ENCODE measurements at regions of chr7 and their contacts with region 1.

Region 1: GRCh38 chr7:131057015-131057793 is 270.5 kb upstream of the MKLN1 start:
- DNase-seq: peak in 2 of 5 donors; percentile 71 to 72
- H3K4me3 ChIP-seq: peak overlapping the region; percentile 1
- H3K4me3 Mint-ChIP-seq: peak overlapping the region; percentile 70 to 88 (median 78)
- H3K27ac ChIP-seq: peak overlapping the region; percentile 58
- H3K27ac Mint-ChIP-seq: peak overlapping the region; percentile 89 to 97 (median 94)
- H3K4me1 ChIP-seq: peaks cover 86% of the 10 kb centered on the region
- H3K4me1 Mint-ChIP-seq: peaks cover 62 to 88% (median 83%) of the 10 kb centered on the region in 3 donors
- H3K27me3 ChIP-seq: no peaks in the 10 kb centered on the region
- H3K27me3 Mint-ChIP-seq: peaks cover 0 to 12% of the 10 kb centered on the region in 2 donors

Region 2: DNA sequence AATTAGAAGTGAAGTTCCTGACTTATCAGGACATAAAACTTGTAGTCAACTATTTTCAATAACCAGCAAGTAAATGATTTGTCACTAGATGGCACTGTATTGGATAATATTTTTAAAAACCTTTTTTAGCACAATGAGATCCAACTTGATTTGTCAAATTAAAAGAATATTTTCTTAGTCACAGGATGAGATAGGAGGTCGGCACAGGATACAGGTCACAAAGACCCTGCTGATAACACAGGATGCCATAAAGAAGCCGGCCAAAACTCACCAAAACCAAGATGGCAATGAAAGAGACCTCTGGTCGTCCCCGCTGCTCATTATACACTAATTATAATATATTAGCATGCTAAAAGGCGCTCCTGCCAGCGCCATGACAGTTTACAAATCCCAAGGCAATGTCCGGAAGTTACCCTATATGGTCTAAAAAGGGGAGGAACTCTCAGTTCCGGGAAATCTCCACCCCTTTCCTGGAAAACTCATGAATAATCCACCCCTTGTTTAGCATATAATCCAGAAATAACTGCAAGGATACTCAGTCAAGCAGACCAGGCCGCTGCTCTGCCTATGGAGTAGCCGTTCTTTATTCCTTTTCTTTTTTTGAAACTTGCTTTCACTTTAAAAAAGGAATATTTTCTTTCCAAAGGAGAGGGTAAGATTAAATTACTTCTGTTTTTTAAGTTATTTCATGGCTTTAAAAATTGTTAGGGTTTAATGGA is 14.7 kb after region 1 on chr7:
- CTCF ChIA-PET with region 1: interaction called, 12 read pairs
- POLR2A ChIA-PET with region 1: interaction called, 5 read pairs
- DNase-seq: no peak
- H3K4me3 ChIP-seq: no peak overlapping the region
- H3K4me3 Mint-ChIP-seq: peak overlapping the region; percentile 2 to 47 (median 24)
- H3K27ac ChIP-seq: peak overlapping the region; percentile 48
- H3K27ac Mint-ChIP-seq: peak overlapping the region in 2 of 8 donors; percentile 12 to 56
- H3K4me1 ChIP-seq: peaks cover 81% of the 10 kb centered on the region
- H3K4me1 Mint-ChIP-seq: peaks cover 38 to 85% (median 38%) of the 10 kb centered on the region in 3 donors
- H3K27me3 ChIP-seq: no peaks in the 10 kb centered on the region
- H3K27me3 Mint-ChIP-seq: peaks cover 0 to 14% of the 10 kb centered on the region in 2 donors

Region 3: DNA sequence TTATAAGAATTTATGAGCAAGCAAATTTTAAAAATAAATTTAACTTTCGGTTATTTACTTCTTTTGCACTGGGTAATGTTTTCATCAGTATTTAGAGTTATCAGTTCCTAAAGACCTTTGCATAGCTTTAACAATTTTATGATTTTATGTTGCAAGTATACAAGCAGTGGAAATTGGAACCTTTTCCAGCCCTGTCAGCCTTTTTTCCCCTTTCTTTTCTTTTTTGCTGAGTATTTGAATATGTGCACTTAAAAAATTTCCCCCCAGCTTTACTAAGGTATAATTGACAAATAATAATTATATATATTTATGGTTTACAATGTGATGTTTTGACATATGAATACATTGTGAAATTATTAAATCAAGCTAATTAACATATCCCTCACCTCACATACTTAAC is 333.1 kb after region 1 on chr7:
- CTCF ChIA-PET with region 1: interaction called, 3 read pairs
- POLR2A ChIA-PET with region 1: interaction called, 10 read pairs
- DNase-seq: no peak
- H3K4me3 ChIP-seq: no peak overlapping the region
- H3K4me3 Mint-ChIP-seq: no peak overlapping the region
- H3K27ac ChIP-seq: no peak overlapping the region
- H3K27ac Mint-ChIP-seq: no peak overlapping the region
- H3K4me1 ChIP-seq: no peaks in the 10 kb centered on the region
- H3K4me1 Mint-ChIP-seq: peaks cover 12 to 40% (median 16%) of the 10 kb centered on the region in 3 donors
- H3K27me3 ChIP-seq: no peaks in the 10 kb centered on the region
- H3K27me3 Mint-ChIP-seq: peaks cover 0 to 1% of the 10 kb centered on the region in 2 donors

Measured in CD8-positive, alpha-beta memory T cell (primary cell).